Astrocyte of the spinal cord (primary cell): ENCODE measurements at regions of chr7 and their contacts with region 1.

Region 1: DNA sequence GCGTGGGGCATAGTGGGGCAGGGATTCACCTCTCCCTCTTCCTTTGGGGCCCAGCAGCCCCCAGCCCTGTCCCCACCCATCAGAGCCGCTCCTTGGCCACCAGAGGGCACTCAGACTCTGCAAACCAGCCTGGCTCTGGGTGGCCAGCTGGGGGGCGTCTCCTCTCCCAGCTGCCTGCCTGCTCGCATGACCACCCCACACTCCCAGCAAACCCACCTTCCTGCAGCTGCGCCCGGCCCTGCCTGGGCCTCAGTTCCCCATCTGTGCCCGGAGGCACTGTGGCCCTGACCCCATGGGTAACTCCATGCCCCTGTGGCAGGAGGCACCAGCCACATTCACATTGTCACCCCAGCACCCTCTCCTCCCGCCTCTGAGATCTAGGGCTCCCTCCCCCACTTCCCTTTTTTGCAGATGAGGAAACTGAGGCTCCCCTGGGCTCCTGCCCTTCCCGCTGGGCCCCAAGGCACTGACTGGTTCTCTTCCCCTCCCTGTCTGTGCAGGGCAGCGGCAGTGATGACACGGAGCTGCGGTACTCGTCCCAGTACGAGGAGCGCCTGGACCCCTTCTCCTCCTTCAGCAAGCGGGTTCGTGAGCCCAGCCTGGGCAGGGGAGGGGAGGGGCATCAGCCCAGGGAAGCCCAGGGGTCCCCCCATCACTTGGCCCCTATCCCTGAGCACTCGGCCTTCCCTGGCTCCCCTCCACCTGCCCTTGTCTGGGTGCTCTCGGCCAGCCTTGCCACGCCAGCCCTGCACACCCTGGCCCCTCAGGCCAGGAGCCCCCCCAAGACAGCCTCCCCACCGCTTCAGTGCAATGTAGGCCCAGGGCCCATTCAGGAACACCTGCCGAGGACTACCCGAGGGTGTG is 6.9 kb upstream of the SH2B2 start:
- DNase-seq: peak; percentile 51
- H3K4me3 ChIP-seq: no peak overlapping the region
- CTCF ChIP-seq: peak; percentile 91

Region 2: GRCh38 chr7:101754424-101755159 is 525.2 kb before region 1 on chr7:
- in situ Hi-C with region 1: no loop called
- DNase-seq: peak; percentile 52
- H3K4me3 ChIP-seq: peak overlapping the region; percentile 43
- CTCF ChIP-seq: no peak

Region 3: DNA sequence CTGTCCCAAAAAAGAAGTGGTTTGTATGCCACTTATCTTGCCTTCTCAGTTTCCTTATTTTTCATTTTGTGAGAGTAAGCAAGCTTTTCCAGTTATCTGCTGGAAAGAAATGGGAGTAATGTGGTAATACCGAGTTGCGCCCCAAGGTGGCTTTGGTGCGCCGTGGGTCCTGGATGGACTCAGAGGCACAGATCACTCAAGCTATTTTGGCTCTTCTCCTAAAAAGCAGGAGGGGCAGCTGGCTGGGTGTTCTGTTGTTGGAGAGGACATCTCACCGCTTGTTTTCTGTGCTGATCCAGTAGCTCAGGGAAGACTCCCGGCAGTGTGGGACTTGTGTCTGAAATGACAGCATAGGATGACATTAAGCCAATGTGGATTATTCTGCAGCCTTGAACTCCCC is 132.8 kb after region 1 on chr7:
- in situ Hi-C with region 1: loop called (anchors 10 kb)
- DNase-seq: peak; percentile 38
- H3K4me3 ChIP-seq: no peak overlapping the region
- CTCF ChIP-seq: peak; percentile 55